MCF 10A (cell line): ENCODE measurements at regions of chr12 and their contacts with region 1.

Region 1: GRCh38 chr12:2890388-2891239 is at the start of gene TULP3:
- DNase-seq: peak; percentile 98
- H3K4me3 Mint-ChIP-seq: peak within 1 kb of the TSS; percentile 86
- H3K27ac Mint-ChIP-seq: peak within 1 kb of the TSS; percentile 94
- H3K4me1 Mint-ChIP-seq: peaks cover 16% of the 10 kb centered on the region
- H3K27me3 Mint-ChIP-seq: no peaks in the 10 kb centered on the region
- CTCF ChIP-seq: no peak
- total RNA-seq, gene TULP3: 36.2 and 42.2 TPM in 2 replicates

Region 2: DNA sequence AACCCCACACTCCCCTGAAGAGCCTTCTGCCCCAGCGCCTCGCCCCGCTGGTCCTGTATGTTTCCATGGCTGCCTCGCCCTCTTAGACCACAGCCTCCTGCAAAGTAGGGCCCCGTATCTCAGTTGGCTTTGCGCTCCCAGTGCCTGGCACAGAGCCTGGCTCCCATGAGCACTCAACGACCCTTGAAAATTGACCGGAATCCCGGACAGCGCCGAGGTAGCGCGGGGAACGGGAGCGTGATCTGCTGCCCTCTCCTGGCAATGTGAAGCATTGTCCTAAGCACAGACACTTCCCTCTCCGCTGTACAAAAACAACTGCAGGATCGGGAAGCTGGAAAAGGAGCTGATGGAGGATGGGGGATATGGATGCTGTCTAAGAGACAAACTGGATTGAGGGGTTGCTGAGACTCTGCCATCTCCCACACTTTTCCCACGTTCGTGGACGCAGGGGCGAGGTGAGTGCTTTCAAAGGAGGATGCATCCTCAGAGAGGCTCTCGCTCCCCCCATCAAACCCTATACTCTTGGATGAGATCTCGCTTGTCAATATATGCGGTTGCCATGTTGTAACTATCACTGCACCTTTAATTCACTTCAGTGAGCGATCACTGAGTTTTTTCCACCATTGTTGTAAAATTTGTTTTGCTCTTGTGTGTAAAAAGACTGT is 106.5 kb before region 1 on chr12:
- CTCF ChIA-PET with region 1: no interaction called
- POLR2A ChIA-PET with region 1: no interaction called
- intact Hi-C with region 1: no loop called
- DNase-seq: peak; percentile 54
- H3K4me3 Mint-ChIP-seq: no peak overlapping the region
- H3K27ac Mint-ChIP-seq: no peak overlapping the region
- H3K4me1 Mint-ChIP-seq: peaks cover 6% of the 10 kb centered on the region
- H3K27me3 Mint-ChIP-seq: peaks cover 80% of the 10 kb centered on the region
- CTCF ChIP-seq: peak; percentile 83

Region 3: GRCh38 chr12:2877047-2877952 is 13.3 kb before region 1 on chr12 and contains the starts of genes FOXM1 and RHNO1:
- CTCF ChIA-PET with region 1: interaction called, 9 read pairs
- POLR2A ChIA-PET with region 1: interaction called, 29 read pairs
- intact Hi-C with region 1: loop called (anchors 1 kb)
- DNase-seq: peak; percentile 86
- H3K4me3 Mint-ChIP-seq: peak within 1 kb of the TSS; percentile 97
- H3K27ac Mint-ChIP-seq: peak within 1 kb of the TSS; percentile 98
- H3K4me1 Mint-ChIP-seq: peaks cover 23% of the 10 kb centered on the region
- H3K27me3 Mint-ChIP-seq: no peaks in the 10 kb centered on the region
- CTCF ChIP-seq: no peak
- total RNA-seq, gene FOXM1: 31.7 and 49.9 TPM in 2 replicates
- total RNA-seq, gene RHNO1: 47.0 and 60.9 TPM in 2 replicates